Aorta (tissue), 5 donors: ENCODE measurements at regions of chr1 and their contacts with region 1.

Region 1: GRCh38 chr1:151993654-151994496 is at the start of gene S100A10:
- DNase-seq: peak; percentile 90 to 93
- ATAC-seq: peak; percentile 85
- H3K4me3 ChIP-seq: peak within 1 kb of the TSS; percentile 75 to 77
- H3K27ac ChIP-seq: peak within 1 kb of the TSS; percentile 24 to 38
- H3K4me1 ChIP-seq: peaks cover 8 to 12% of the 10 kb centered on the region in 2 donors
- H3K27me3 ChIP-seq: no peaks in the 10 kb centered on the region
- total RNA-seq, gene S100A10: 188 to 386 TPM

Region 2: DNA sequence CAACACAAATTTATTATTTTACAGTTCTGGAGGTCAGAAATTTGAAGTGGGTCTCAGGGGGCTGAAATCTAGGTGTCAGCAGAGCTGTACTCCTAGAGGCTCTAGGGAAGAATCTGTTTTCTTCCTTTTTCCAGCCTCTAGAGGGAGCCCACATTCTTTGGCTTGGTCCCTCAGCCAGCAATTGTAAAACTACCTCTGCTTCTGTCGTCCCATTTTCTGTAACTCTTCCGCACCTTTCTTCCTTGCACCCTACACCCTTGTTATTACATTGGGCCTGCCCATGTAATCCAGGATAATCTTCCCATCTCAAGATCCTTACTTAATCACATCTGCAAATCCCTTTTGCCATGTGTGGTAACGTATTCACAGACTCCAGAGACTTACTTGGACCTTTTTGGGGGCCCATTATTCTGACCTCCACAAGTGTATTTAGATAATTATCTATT is 59.8 kb before region 1 on chr1:
- intact Hi-C with region 1: loop called in 1 of 2 experiments (anchors 2 kb)
- DNase-seq: no peak
- ATAC-seq: peak; percentile 83
- H3K4me3 ChIP-seq: no peak overlapping the region
- H3K27ac ChIP-seq: no peak overlapping the region
- H3K4me1 ChIP-seq: no peaks in the 10 kb centered on the region
- H3K27me3 ChIP-seq: no peaks in the 10 kb centered on the region